Heart right ventricle (tissue), 16 donors: ENCODE measurements at regions of chr16 and their contacts with region 1.

Region 1: DNA sequence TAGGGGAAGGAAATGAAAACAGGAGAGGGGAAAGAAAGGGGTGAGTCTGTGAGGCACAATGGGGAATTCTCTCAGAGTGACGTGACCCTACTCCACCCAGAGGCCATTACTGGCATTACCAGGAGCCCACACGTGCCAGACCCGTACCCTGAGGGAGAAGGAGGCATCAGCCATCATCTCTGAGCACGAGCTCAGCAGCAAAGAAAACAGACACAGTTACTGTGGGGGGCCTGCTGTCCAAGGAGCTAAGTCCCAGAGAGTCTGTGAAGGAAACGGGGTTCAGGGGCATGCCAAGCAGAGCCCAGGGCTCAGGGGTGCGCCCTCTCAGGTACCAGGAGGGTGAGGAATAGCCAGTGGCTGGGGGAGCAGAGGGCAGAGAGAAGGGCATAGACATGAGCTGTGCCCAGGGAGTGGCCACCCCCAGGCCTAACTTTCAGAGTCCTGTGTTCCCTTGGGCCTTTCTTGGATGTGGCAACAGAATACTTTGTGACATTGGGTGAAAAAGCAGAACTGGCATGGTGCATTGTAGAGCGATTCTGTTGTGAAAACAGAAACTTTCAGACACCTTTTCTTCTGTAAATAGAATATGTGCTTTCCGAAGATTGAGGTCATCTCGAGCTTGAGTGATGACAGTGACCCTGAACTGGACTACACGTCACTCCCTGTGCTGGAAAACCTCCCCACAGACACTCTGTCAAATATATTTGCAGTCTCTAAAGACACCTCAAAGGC is 11.3 kb downstream of the TAF1C start:
- DNase-seq: no peak
- ATAC-seq: peak in 4 of 8 donors; percentile 27 to 68 (median 47)
- H3K4me3 ChIP-seq: no peak overlapping the region
- H3K27ac ChIP-seq: peak overlapping the region in 9 of 10 donors; percentile 22 to 91 (median 87)
- H3K4me1 ChIP-seq: peaks cover 27 to 56% (median 43%) of the 10 kb centered on the region in 9 donors
- H3K27me3 ChIP-seq: no peaks in the 10 kb centered on the region
- CTCF ChIP-seq: peak in 7 of 9 donors; percentile 50 to 81 (median 59)

Region 2: DNA sequence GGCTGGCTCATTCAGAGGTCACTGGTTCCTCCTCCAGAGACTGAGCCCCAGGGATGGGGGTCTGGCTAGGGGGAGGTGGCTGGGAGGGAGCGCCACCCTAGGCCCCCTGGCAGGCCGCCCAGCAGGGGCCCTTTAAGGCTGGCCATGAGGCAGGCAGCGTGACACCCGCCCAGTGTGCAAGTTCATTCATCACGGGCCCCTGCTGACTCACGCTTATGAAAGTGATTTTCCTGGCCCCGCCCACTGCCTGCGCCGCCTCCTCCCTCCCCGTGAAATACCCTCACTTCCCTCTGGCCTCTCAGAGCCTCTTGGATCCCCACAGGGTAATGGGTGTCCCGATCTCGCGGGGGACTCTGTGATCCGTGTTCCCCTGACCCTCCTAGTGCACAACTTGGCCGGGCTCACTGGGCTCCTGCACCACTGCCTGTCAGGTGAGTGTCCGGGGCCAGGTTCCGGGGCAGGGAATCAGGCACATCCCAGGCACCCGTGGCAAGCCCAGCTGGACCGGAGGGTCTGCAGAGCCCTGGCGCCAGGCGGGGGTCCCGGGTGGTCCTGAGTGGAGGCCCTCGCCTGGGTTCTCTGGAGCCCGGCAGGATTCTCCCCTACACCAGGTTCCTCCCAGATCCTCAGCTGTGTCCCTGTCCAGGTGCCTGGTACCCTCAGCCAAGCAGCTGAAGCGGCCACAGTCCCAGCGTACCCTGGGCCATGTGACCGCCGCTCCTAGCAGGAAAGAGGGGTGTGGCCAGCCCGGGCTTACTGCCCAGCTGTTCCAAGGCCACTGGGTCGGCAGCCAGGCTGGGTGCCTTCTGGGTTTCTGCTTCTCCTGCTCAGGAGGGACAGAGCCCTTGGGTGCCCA is 222.3 kb before region 1 on chr16 and contains the start of gene OSGIN1:
- intact Hi-C with region 1: loop called in 1 of 10 experiments (anchors 5 kb)
- DNase-seq: peak; percentile 90 to 94
- ATAC-seq: peak; percentile 90 to 96 (median 94)
- H3K4me3 ChIP-seq: peak within 1 kb of the TSS; percentile 43 to 73 (median 63)
- H3K27ac ChIP-seq: peak within 1 kb of the TSS; percentile 78 to 97 (median 92)
- H3K4me1 ChIP-seq: peaks cover 11 to 45% (median 31%) of the 10 kb centered on the region in 9 donors
- H3K27me3 ChIP-seq: no peaks in the 10 kb centered on the region
- CTCF ChIP-seq: no peak
- total RNA-seq, gene OSGIN1: 3.2 to 14.5 (median 5.3) TPM

Region 3: DNA sequence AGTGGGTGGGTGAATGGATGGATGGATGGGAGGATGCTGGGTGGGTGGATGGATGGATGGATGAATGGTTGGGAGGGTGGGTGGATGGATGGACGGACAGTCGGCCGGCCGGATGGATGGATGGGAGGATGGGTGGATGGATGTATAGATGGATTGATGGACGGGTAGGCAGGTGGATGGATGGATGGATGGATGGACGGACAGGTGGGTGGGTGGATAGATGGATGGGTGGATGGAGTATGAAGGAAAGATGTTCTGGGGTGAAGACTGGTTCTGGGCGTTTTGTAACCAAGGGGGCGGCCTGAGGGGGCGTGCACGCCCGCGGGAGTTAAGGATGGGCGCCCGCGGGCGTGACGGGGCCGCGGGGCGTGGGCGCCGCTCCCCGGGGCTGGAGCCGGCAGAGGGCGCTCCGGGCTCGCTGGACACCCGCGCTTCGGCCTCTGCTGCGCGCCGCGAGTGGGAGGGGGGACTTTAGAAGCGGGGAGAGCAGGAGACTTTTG is 207.7 kb before region 1 on chr16 and contains the start of gene NECAB2:
- intact Hi-C with region 1: loop called in 4 of 10 experiments (anchors 10 kb)
- DNase-seq: peak; percentile 40 to 62
- ATAC-seq: peak in 6 of 8 donors; percentile 22 to 65 (median 42)
- H3K4me3 ChIP-seq: peak within 1 kb of the TSS in 9 of 10 donors; percentile 29 to 47 (median 38)
- H3K27ac ChIP-seq: no peak within 1 kb of the TSS
- H3K4me1 ChIP-seq: peaks cover 0 to 10% (median 0%) of the 10 kb centered on the region in 9 donors
- H3K27me3 ChIP-seq: peaks cover 0 to 24% (median 8%) of the 10 kb centered on the region in 7 donors
- CTCF ChIP-seq: peak; percentile 33 to 81 (median 69)
- total RNA-seq, gene NECAB2: 0.32 to 1.1 (median 0.90) TPM

Region 4: DNA sequence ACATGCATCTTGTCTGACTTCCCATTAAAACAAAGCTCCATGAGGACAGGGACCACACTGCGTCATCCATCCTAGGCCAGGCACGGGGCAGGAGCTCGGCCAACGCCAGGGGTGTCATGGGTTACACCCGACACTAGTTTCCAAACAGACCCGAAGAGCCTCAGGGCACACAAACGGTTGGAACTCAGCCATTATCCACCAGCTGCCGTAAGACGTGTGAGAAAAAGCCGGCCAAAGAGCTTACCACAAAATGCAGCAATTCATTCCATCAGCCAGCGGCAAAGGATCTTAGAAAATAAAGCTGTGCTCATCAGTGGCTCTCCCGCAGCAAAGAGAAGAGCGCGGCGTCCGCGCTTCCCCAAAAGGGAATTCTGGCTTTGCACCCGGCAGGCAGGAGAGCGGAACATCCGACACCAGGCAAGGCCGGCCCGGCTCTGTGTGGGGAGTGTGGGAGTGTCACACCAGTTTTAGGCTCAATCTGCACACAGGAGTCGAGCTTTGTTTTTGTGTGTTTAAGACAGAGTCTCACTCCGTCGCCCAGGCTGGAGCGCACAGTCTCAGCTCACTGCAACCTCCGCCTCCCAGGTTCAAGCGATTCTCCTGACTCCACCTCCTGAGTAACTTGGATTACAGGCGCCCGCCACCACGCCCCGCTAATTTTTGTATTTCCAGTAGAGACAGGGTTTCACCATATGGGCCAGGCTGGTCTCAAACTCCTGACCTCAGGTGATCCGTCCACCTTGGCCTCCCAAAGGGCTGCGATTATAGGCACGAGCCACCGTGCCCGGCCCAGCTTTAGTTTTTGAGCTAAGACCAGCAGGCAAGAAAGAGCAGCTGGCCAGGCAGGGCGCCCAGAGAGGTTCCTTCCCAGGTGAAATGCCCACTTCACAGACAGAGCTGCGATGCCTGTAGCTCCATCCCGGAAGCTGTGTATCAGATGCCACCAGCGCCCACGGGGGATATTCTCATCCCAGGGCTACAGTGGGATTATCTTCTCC is 134.4 kb before region 1 on chr16:
- intact Hi-C with region 1: no loop called
- DNase-seq: no peak
- ATAC-seq: peak in 1 of 8 donors; percentile 2
- H3K4me3 ChIP-seq: no peak overlapping the region
- H3K27ac ChIP-seq: no peak overlapping the region
- H3K4me1 ChIP-seq: peaks cover 0 to 17% (median 6%) of the 10 kb centered on the region in 9 donors
- H3K27me3 ChIP-seq: peaks cover 0 to 40% (median 6%) of the 10 kb centered on the region in 7 donors
- CTCF ChIP-seq: no peak

Region 5: GRCh38 chr16:84084570-84085270 is 90.8 kb before region 1 on chr16:
- intact Hi-C with region 1: loop called in 6 of 10 experiments (anchors 2 to 10 kb)
- DNase-seq: peak; percentile 43 to 64
- ATAC-seq: peak in 7 of 8 donors; percentile 9 to 50 (median 40)
- H3K4me3 ChIP-seq: no peak overlapping the region
- H3K27ac ChIP-seq: peak overlapping the region in 6 of 10 donors; percentile 3 to 77 (median 67)
- H3K4me1 ChIP-seq: peaks cover 0 to 54% (median 25%) of the 10 kb centered on the region in 9 donors
- H3K27me3 ChIP-seq: no peaks in the 10 kb centered on the region
- CTCF ChIP-seq: peak; percentile 30 to 74 (median 66)

Region 6: DNA sequence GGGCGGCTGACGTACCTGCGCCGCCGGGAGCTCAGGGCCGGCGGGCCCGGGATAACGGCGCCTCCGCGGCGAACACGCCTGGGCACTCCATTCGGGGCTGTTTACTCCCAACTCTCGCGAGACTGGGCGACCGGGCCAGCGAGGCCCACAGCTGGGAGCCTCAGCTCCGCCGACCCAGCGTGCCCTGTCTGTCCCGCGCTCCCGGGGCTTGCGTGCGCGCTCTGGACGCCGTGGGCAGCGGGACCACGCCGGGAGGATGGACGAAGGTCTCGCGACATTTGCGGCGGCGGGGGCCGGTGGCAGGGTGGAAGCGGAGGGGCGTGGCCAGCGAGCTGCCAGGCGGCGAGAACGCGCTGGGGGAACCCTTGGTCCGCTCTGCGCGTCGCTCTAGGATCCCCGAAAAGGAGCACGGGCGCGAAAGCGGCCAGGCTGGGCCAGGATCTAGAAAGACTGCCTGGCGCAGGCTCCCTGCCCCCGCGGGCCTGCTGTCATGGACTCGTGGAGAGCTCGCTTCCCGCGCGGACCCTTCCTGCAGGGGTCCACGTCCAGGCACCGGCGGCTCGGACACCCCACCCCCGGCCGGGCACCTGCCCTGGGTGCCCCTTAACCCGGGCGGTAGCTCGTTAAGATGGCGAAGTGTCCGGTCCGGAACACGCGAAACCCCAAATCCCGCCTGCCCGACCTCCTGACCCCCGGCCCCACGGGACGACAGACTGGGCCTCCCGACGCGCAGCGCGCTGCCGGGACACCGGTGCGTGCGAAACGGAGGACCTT is 58.6 kb before region 1 on chr16 and contains the start of gene MBTPS1:
- intact Hi-C with region 1: loop called in 1 of 10 experiments (anchors 5 kb)
- DNase-seq: peak; percentile 98 to 99
- ATAC-seq: peak; percentile 98 to 100 (median 99)
- H3K4me3 ChIP-seq: peak within 1 kb of the TSS; percentile 73 to 98 (median 88)
- H3K27ac ChIP-seq: peak within 1 kb of the TSS; percentile 76 to 98 (median 93)
- H3K4me1 ChIP-seq: peaks cover 2 to 42% (median 28%) of the 10 kb centered on the region in 9 donors
- H3K27me3 ChIP-seq: no peaks in the 10 kb centered on the region
- CTCF ChIP-seq: peak in 2 of 9 donors; percentile 23 to 32
- total RNA-seq, gene MBTPS1: 55.9 to 122 (median 73.5) TPM

Region 7: DNA sequence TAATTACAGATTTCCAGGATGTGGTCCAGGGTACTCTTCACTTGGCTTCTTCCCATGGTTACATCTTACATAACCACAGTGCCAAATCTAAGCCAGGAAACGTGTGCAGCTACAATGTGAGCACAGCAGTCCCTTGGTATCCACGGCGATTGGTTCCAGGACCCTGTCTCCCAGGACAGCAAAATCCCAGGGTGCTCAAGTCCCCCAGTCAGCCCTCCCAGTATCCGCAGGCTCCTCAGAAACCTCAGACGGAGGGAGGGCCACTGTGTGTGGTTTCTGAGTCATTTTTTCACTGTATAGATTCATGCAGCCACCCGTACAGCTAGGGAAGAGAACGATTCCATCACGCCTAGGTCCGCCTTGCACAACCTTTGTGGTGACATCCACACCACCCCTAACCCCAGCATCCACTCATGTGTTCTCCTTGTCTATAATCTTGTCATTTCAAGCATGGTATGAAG is 181.7 kb after region 1 on chr16:
- intact Hi-C with region 1: no loop called
- DNase-seq: no peak
- ATAC-seq: no peak
- H3K4me3 ChIP-seq: no peak overlapping the region
- H3K27ac ChIP-seq: no peak overlapping the region
- H3K4me1 ChIP-seq: peaks cover 0 to 4% (median 0%) of the 10 kb centered on the region in 9 donors
- H3K27me3 ChIP-seq: peaks cover 0 to 21% (median 3%) of the 10 kb centered on the region in 7 donors
- CTCF ChIP-seq: no peak